ENCODE measurements at regions of chr1 and their contacts with region 1.

Region 1: DNA sequence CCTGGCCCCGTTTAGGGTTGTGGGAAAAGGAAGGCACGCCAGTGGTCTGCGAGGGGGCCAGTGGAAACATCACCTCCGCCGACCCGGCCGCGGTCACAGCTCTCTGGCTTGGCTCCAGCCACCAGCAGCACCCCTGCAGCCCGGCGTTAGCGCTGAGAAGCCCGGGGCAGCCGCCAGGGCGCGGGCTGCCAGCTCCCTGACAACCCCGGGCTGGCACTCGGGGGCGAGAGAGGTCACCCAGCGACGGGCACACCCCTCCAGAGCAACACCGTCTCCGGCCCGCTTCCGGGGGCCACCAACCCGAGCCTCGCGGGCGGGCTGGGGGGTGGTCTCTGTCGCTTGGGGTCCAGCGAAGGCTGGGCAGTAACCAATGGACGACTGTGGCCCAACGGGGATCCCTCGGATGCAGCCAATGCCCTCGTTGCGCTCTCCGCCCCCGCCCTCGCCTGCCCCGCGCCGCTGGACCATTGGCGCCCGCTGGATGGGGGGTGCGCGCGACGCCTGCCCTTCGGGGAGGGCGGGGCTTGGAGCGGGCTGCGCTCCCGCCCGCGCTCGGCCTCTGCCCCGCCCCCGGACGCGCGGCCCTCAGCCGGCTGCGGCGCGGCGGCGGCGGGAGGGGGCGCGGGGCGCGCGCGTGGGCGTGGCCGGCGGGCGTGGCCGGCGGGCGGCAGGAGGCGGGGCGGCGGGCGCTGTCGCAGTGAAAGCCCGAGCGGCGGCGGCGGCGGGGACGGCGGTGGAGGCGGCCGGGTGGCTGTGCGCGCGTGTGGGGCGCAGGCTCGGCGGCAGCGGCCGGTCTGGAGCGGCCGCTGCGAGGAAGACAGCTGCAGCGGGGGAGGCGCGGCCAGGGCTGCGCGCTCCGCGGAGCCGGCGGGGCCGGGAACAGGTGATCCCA is at the start of gene MAN1C1:
- DNase-seq: peak; percentile 77 to 87 (median 85)
- H3K4me3 ChIP-seq: peak within 1 kb of the TSS in 1 of 2 donors; percentile 71
- H3K4me3 Mint-ChIP-seq: peak within 1 kb of the TSS; percentile 64 to 85 (median 78)
- H3K27ac ChIP-seq: peak within 1 kb of the TSS; percentile 65
- H3K27ac Mint-ChIP-seq: peak within 1 kb of the TSS; percentile 43 to 86 (median 75)
- H3K4me1 ChIP-seq: peaks cover 58% of the 10 kb centered on the region
- H3K4me1 Mint-ChIP-seq: peaks cover 48 to 53% (median 49%) of the 10 kb centered on the region in 4 donors
- H3K27me3 ChIP-seq: no peaks in the 10 kb centered on the region
- H3K27me3 Mint-ChIP-seq: no peaks in the 10 kb centered on the region
- total RNA-seq, gene MAN1C1: 42.6 to 45.1 TPM

Region 2: GRCh38 chr1:25247024-25247828 is 369.1 kb before region 1 on chr1 and contains the start of gene RSRP1:
- CTCF ChIA-PET with region 1: no interaction called
- POLR2A ChIA-PET with region 1: no interaction called
- intact Hi-C with region 1: no loop called
- DNase-seq: peak; percentile 99 to 100 (median 99)
- H3K4me3 ChIP-seq: peak within 1 kb of the TSS; percentile 89 to 98
- H3K4me3 Mint-ChIP-seq: peak within 1 kb of the TSS; percentile 96 to 100 (median 98)
- H3K27ac ChIP-seq: peak within 1 kb of the TSS; percentile 97
- H3K27ac Mint-ChIP-seq: peak within 1 kb of the TSS; percentile 99 to 100 (median 100)
- H3K4me1 ChIP-seq: peaks cover 45% of the 10 kb centered on the region
- H3K4me1 Mint-ChIP-seq: peaks cover 25 to 66% (median 39%) of the 10 kb centered on the region in 4 donors
- H3K27me3 ChIP-seq: no peaks in the 10 kb centered on the region
- H3K27me3 Mint-ChIP-seq: peaks cover 0 to 2% of the 10 kb centered on the region in 2 donors
- total RNA-seq, gene RSRP1: 470 to 494 TPM

Region 3: DNA sequence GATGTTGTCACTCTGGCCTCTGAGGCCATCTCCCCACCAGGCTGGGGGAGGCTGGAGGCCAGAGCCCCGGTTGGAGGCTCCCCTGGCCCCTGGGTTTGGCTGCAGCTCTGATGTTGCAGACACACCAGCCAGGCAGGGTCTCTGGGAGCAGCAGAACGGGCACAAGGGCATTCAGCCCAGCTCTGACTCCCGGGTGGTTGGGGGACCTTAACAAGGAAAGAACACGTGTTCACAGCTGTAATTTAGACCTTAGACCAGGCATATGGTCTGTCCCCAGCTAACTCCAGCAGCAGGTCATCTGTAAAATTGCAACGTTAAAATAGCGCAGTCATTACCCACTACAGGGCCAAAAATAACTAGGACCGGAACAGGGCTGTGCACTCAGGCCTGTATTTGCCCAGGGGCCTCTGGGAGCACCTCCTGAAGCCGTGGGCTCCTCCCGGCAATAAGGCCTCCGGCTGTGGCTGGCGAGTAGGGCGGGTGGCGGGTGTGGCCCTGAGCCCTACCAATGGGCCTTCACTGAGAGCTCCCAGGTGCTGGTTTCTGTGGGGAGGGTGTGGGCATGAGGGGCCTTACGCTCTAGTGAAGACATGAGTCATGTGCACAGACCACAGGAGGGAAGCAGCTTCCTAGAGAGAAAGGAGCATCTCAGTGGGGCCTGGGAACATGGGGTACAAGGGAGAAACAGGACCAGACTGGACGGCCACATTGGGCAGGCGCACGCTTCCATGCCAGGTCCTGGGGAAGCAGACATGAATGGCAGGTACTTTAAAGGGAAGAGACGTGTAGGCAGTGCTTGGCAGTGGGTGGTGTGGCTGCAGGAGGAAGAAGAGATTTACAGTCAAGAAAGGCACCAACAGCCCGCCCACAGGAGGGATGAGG is 66.8 kb before region 1 on chr1:
- CTCF ChIA-PET with region 1: interaction called, 4 read pairs
- POLR2A ChIA-PET with region 1: interaction called, 26 read pairs
- intact Hi-C with region 1: loop called (anchors 5 kb)
- DNase-seq: peak; percentile 71 to 92 (median 72)
- H3K4me3 ChIP-seq: peak overlapping the region in 1 of 2 donors; percentile 23
- H3K4me3 Mint-ChIP-seq: peak overlapping the region; percentile 72 to 93 (median 80)
- H3K27ac ChIP-seq: peak overlapping the region; percentile 67
- H3K27ac Mint-ChIP-seq: peak overlapping the region; percentile 75 to 99 (median 96)
- H3K4me1 ChIP-seq: peaks cover 98% of the 10 kb centered on the region
- H3K4me1 Mint-ChIP-seq: peaks cover 68 to 98% (median 92%) of the 10 kb centered on the region in 4 donors
- H3K27me3 ChIP-seq: no peaks in the 10 kb centered on the region
- H3K27me3 Mint-ChIP-seq: no peaks in the 10 kb centered on the region

Region 4: GRCh38 chr1:25642574-25643108 is 26.3 kb after region 1 on chr1:
- CTCF ChIA-PET with region 1: interaction called, 63 read pairs
- POLR2A ChIA-PET with region 1: interaction called, 151 read pairs
- intact Hi-C with region 1: loop called (anchors 1 kb)
- DNase-seq: peak; percentile 84 to 89 (median 86)
- H3K4me3 ChIP-seq: peak overlapping the region in 1 of 2 donors; percentile 16
- H3K4me3 Mint-ChIP-seq: peak overlapping the region; percentile 71 to 92 (median 81)
- H3K27ac ChIP-seq: peak overlapping the region; percentile 54
- H3K27ac Mint-ChIP-seq: peak overlapping the region; percentile 87 to 99 (median 94)
- H3K4me1 ChIP-seq: peaks cover 67% of the 10 kb centered on the region
- H3K4me1 Mint-ChIP-seq: peaks cover 50 to 81% (median 64%) of the 10 kb centered on the region in 4 donors
- H3K27me3 ChIP-seq: no peaks in the 10 kb centered on the region
- H3K27me3 Mint-ChIP-seq: no peaks in the 10 kb centered on the region

Region 5: DNA sequence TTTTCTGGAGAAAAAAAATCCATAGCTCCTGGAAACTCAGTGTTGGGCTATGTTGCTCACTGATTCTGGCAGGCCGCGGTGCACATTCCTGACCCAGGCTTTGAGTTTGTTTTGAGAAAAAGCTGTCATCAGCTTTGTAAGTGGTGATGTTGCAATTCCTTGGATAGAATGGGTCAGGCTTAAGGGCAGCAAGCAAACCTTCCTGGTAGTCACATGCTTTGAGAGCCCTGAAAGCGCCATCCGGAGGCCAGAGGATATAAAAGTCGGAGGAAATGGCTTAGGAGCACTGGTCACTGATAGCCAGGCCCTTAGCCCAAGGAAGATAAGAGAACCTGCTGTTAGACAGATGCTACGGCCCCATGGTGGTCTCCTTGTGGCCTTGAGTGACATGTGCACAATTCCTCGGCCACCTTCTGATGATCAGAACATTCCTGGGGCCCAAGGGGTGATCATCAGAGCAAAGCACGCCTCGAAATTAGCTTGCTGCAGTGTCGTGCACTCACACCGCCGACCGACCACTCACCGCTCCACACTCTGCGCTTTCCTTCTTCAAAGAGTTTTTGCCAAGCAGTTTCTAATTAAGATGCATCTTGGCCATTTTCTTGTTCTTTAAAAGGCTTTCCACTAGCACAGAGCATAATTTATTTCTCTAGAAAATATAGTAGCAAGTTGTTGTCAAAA is 78.9 kb after region 1 on chr1:
- CTCF ChIA-PET with region 1: interaction called, 17 read pairs
- POLR2A ChIA-PET with region 1: interaction called, 4 read pairs
- intact Hi-C with region 1: loop called (anchors 2 kb)
- DNase-seq: no peak
- H3K4me3 ChIP-seq: no peak overlapping the region
- H3K4me3 Mint-ChIP-seq: no peak overlapping the region
- H3K27ac ChIP-seq: no peak overlapping the region
- H3K27ac Mint-ChIP-seq: peak overlapping the region in 2 of 7 donors; percentile 15 to 38
- H3K4me1 ChIP-seq: peaks cover 25% of the 10 kb centered on the region
- H3K4me1 Mint-ChIP-seq: peaks cover 22 to 67% (median 29%) of the 10 kb centered on the region in 4 donors
- H3K27me3 ChIP-seq: no peaks in the 10 kb centered on the region
- H3K27me3 Mint-ChIP-seq: no peaks in the 10 kb centered on the region

Region 6: DNA sequence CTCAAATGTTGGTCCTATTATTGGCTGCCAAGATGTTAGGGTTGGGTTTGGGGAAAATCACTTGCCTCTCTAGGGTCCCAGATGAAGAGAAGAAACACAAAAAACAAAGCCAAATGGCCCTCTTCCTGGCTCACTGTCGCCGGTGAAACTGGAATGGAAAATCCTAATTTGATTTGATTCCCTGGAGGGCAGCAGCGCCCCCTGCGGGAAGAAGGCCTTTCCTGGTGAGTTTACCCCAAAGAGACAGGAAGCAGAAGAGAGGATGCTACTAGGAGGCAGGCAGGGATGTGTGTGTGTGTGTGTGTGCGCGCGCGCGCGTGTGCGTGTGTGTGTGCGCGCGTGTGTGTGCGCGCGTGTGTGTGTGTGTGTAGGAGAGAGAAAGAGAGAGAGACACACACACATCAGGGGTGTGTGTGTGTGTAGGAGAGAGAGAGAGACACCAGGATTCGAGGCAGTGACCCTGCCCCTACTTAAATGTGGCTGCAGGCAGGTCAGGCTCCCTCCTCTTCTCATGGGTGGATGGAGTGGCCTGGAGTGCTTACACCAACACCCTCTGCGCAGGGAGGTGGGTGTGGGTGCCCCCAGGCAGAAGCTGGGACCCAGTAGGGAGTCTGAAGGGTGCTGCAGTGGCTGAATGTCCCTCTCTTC is 180.6 kb after region 1 on chr1:
- CTCF ChIA-PET with region 1: interaction called, 218 read pairs
- POLR2A ChIA-PET with region 1: interaction called, 46 read pairs
- intact Hi-C with region 1: loop called (anchors 2 kb)
- DNase-seq: peak; percentile 78 to 87 (median 81)
- H3K4me3 ChIP-seq: peak overlapping the region in 1 of 2 donors; percentile 44
- H3K4me3 Mint-ChIP-seq: peak overlapping the region; percentile 58 to 88 (median 80)
- H3K27ac ChIP-seq: peak overlapping the region; percentile 45
- H3K27ac Mint-ChIP-seq: peak overlapping the region; percentile 86 to 98 (median 95)
- H3K4me1 ChIP-seq: peaks cover 54% of the 10 kb centered on the region
- H3K4me1 Mint-ChIP-seq: peaks cover 32 to 66% (median 49%) of the 10 kb centered on the region in 4 donors
- H3K27me3 ChIP-seq: no peaks in the 10 kb centered on the region
- H3K27me3 Mint-ChIP-seq: peaks cover 0 to 2% of the 10 kb centered on the region in 2 donors

Region 7: GRCh38 chr1:25858906-25859789 is 242.8 kb after region 1 on chr1 and contains the start of gene AUNIP:
- CTCF ChIA-PET with region 1: no interaction called
- POLR2A ChIA-PET with region 1: no interaction called
- intact Hi-C with region 1: no loop called
- DNase-seq: peak; percentile 88 to 89 (median 89)
- H3K4me3 ChIP-seq: peak within 1 kb of the TSS; percentile 56 to 71
- H3K4me3 Mint-ChIP-seq: peak within 1 kb of the TSS; percentile 87 to 95 (median 92)
- H3K27ac ChIP-seq: peak within 1 kb of the TSS; percentile 80
- H3K27ac Mint-ChIP-seq: peak within 1 kb of the TSS; percentile 92 to 98 (median 94)
- H3K4me1 ChIP-seq: peaks cover 16% of the 10 kb centered on the region
- H3K4me1 Mint-ChIP-seq: peaks cover 9 to 24% (median 14%) of the 10 kb centered on the region in 4 donors
- H3K27me3 ChIP-seq: no peaks in the 10 kb centered on the region
- H3K27me3 Mint-ChIP-seq: no peaks in the 10 kb centered on the region
- total RNA-seq, gene AUNIP: not detected

Region 8: DNA sequence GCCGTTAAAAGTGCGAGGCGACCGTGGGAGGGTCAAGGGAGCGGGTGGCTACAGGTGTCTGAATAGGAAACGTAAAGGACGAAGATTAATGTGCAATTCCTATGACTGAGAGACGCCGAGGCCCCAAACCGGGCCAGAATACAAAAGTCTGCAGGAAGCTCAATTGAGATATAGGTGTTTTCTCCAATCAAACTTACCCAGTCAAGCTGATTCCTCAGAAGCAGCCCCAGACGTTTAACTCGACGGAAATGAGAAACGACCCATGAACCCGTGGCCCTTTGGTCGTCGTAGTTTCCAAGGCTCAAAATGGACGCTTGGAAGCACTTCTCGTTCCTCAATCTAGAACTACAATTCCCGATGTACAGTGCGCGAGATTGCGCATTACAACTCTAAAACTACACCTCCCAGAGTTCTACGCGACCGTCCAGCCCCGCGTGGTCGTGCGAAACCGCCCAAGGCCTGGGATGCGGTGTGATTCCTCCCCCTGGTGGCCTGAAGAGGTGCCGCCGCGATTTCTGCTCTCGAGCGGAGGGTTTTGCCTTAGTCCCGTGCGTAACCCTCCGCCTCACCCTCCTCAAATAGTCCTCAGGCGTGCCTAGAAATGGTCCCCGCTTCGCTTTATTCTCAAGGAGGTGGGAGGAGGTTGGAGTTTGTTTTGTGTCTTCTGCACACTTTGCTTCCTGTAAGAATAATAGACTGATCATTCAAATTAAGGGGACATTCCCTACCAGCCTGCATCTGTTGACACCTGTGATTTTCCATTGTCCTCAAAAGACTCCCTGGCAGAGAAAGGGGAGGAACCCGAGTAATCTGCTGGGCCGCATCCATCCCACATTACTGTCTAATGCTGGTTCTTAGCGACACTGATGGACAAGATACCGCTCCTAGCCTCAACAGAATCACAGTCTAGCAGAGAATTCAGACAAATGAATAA is 381.8 kb after region 1 on chr1 and contains the start of gene PAFAH2:
- CTCF ChIA-PET with region 1: no interaction called
- POLR2A ChIA-PET with region 1: no interaction called
- intact Hi-C with region 1: loop called (anchors 5 kb)
- DNase-seq: peak; percentile 95 to 99 (median 98)
- H3K4me3 ChIP-seq: peak within 1 kb of the TSS; percentile 67 to 86
- H3K4me3 Mint-ChIP-seq: peak within 1 kb of the TSS; percentile 92 to 96 (median 94)
- H3K27ac ChIP-seq: peak within 1 kb of the TSS; percentile 84
- H3K27ac Mint-ChIP-seq: peak within 1 kb of the TSS; percentile 97 to 99 (median 98)
- H3K4me1 ChIP-seq: peaks cover 29% of the 10 kb centered on the region
- H3K4me1 Mint-ChIP-seq: peaks cover 21 to 31% (median 28%) of the 10 kb centered on the region in 4 donors
- H3K27me3 ChIP-seq: no peaks in the 10 kb centered on the region
- H3K27me3 Mint-ChIP-seq: no peaks in the 10 kb centered on the region
- total RNA-seq, gene PAFAH2: 18.3 to 20.0 TPM

Measured in CD4-positive, alpha-beta memory T cell (primary cell).